ENCODE measurements at regions of chr1 and their contacts with region 1.

Region 1: GRCh38 chr1:173420330-173420806 is 56.8 kb upstream of the PRDX6 start:
- DNase-seq: peak; percentile 61 to 68
- H3K4me3 ChIP-seq: no peak overlapping the region
- H3K27ac ChIP-seq: no peak overlapping the region
- H3K4me1 ChIP-seq: peaks cover 36% of the 10 kb centered on the region
- H3K27me3 ChIP-seq: no peaks in the 10 kb centered on the region
- CTCF ChIP-seq: peak; percentile 95

Region 2: DNA sequence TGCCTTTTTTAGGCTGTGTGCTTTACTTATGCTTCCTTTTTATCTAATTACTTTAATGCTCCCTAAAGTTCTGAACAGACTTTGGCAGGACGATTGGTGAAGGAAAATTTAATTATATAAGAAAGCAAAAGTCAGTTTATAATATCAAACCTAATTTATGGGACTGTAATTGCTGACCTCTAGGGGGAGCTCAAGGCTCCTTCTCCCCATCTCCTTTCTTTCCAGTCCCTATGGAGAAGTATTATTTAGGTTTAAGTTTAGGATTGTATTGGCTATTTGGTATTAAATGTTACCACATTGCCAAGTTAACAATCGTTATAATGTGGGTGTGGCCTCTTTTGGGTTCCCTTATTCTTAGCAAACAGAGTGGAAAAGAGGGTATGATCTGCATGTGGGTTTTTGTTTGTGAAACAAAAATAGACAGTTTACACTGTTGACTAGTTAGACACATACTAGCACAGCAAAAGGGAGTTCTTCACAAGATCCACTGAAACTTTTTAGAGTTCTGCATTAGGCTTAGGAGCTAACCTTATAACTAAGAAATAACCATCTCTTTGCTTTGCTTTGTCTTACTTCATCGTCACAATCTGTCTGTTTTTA is 165.1 kb before region 1 on chr1:
- CTCF ChIA-PET with region 1: no interaction called
- POLR2A ChIA-PET with region 1: no interaction called
- intact Hi-C with region 1: loop called (anchors 5 kb)
- DNase-seq: peak in 1 of 2 experiments; percentile 11
- H3K4me3 ChIP-seq: no peak overlapping the region
- H3K27ac ChIP-seq: no peak overlapping the region
- H3K4me1 ChIP-seq: no peaks in the 10 kb centered on the region
- H3K27me3 ChIP-seq: no peaks in the 10 kb centered on the region
- CTCF ChIP-seq: peak; percentile 86

Region 3: GRCh38 chr1:173824331-173825081 is 404.1 kb after region 1 on chr1 and contains the starts of genes CENPL and DARS2:
- CTCF ChIA-PET with region 1: no interaction called
- POLR2A ChIA-PET with region 1: interaction called, 5 read pairs
- intact Hi-C with region 1: loop called (anchors 1 kb)
- DNase-seq: peak; percentile 86 to 90
- H3K4me3 ChIP-seq: peak within 1 kb of the TSS; percentile 84
- H3K27ac ChIP-seq: peak within 1 kb of the TSS; percentile 95
- H3K4me1 ChIP-seq: peaks cover 17% of the 10 kb centered on the region
- H3K27me3 ChIP-seq: no peaks in the 10 kb centered on the region
- CTCF ChIP-seq: no peak
- total RNA-seq, gene CENPL: 14.4 and 19.5 TPM in 2 replicates
- total RNA-seq, gene DARS2: 15.0 and 18.3 TPM in 2 replicates

Region 4: GRCh38 chr1:173861731-173862145 is 441.4 kb after region 1 on chr1:
- CTCF ChIA-PET with region 1: no interaction called
- POLR2A ChIA-PET with region 1: interaction called, 13 read pairs
- intact Hi-C with region 1: no loop called
- DNase-seq: peak in 1 of 2 experiments; percentile 56
- H3K4me3 ChIP-seq: no peak overlapping the region
- H3K27ac ChIP-seq: peak overlapping the region; percentile 31
- H3K4me1 ChIP-seq: peaks cover 25% of the 10 kb centered on the region
- H3K27me3 ChIP-seq: no peaks in the 10 kb centered on the region
- CTCF ChIP-seq: no peak

Region 5: DNA sequence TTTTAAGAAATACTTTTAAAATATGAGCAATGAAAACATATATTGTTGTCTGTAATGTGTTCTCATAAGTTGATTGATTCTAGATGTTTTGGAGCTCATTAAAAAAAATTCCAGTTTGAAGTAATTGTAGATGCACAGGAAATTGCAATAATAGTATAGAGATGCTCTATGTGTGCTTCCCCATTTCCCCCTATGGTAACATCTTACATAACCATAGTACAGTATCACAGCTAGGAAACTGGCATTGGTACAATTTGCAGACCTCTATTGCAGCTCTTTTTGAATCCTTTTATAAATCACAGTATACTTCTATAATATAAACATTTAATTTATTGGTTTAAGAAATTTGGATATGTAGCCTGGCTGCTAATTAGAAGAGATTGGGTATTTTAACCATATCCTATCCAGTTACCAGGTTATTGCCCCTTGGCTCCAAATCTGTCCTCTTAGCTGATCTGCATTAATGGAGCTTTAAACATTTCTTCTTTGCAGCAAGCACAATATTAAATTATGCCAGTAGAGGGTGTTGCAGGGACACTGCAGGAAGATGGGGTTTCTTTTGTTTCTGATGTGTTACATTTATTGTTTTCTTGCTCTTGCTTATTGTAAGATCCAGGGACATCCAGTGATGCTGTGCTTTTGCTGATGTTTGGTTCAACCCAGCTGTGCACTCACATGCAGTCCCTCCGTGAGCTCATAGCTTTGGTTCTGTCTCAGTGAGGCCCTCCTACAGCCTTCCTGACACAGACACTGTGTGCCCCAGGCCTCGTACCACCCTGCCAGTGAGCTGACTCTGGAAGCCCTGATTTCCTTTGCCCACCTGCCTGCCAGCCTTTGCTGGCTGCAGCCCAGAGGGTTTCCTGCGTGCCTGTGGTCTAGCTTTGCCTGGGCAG is 842.2 kb after region 1 on chr1:
- CTCF ChIA-PET with region 1: no interaction called
- POLR2A ChIA-PET with region 1: no interaction called
- intact Hi-C with region 1: loop called (anchors 5 kb)
- DNase-seq: peak in 1 of 2 experiments; percentile 6
- H3K4me3 ChIP-seq: no peak overlapping the region
- H3K27ac ChIP-seq: no peak overlapping the region
- H3K4me1 ChIP-seq: no peaks in the 10 kb centered on the region
- H3K27me3 ChIP-seq: no peaks in the 10 kb centered on the region
- CTCF ChIP-seq: peak; percentile 84